Heart right ventricle (tissue), 16 donors: ENCODE measurements at regions of chr14 and their contacts with region 1.

Region 1: GRCh38 chr14:58637391-58638230 is at the start of gene DACT1:
- DNase-seq: peak; percentile 51 to 77
- ATAC-seq: peak; percentile 65 to 91 (median 76)
- H3K4me3 ChIP-seq: peak within 1 kb of the TSS; percentile 49 to 81 (median 70)
- H3K27ac ChIP-seq: peak within 1 kb of the TSS; percentile 71 to 93 (median 84)
- H3K4me1 ChIP-seq: peaks cover 0 to 43% (median 23%) of the 10 kb centered on the region in 9 donors
- H3K27me3 ChIP-seq: peaks cover 0 to 36% (median 0%) of the 10 kb centered on the region in 7 donors
- CTCF ChIP-seq: peak in 3 of 9 donors; percentile 10 to 12 (median 12)
- total RNA-seq, gene DACT1: 1.3 to 5.5 (median 3.1) TPM

Region 2: DNA sequence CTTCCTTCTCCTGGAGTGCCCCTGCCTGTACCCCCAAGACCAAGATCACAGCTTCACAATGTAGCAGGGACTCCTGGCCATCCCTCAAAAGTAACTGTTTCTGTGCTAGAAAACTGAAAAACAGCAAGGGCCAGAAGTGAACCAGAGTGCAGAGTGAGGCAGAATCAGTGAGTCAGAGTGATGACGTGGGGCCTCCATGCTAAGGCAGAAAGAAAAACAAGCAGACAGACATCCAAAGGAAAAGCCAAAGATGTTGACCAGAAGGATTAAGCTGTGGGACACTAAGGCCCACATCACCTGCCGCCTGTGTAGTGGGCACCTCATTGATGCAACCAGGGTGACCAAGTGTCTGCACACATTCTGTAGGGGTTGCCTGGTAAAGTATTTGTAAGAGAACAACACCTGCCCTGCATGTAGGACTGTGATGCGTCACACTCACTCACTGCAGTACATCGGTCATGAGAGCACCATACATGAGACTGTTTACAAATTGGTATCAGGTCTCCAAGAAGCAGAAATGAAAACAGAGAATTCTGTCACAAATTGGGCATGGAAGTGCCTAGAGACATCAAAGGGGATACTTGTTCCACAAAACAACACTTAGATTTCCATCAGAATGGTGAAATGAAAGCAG is 536.8 kb before region 1 on chr14:
- intact Hi-C with region 1: no loop called
- DNase-seq: no peak
- ATAC-seq: no peak
- H3K4me3 ChIP-seq: no peak overlapping the region
- H3K27ac ChIP-seq: peak overlapping the region in 3 of 10 donors; percentile 1 to 90 (median 90)
- H3K4me1 ChIP-seq: peaks cover 0 to 69% (median 9%) of the 10 kb centered on the region in 9 donors
- H3K27me3 ChIP-seq: no peaks in the 10 kb centered on the region
- CTCF ChIP-seq: no peak

Region 3: GRCh38 chr14:58501214-58501816 is 136.3 kb before region 1 on chr14:
- intact Hi-C with region 1: loop called in 6 of 10 experiments (anchors 5 to 10 kb)
- DNase-seq: peak in 1 of 2 donors; percentile 22
- ATAC-seq: peak in 3 of 8 donors; percentile 44 to 62 (median 50)
- H3K4me3 ChIP-seq: no peak overlapping the region
- H3K27ac ChIP-seq: no peak overlapping the region
- H3K4me1 ChIP-seq: no peaks in the 10 kb centered on the region
- H3K27me3 ChIP-seq: no peaks in the 10 kb centered on the region
- CTCF ChIP-seq: peak; percentile 57 to 87 (median 82)

Region 4: GRCh38 chr14:58705066-58705465 is 67.5 kb after region 1 on chr14:
- intact Hi-C with region 1: loop called in 1 of 10 experiments (anchors 2 kb)
- DNase-seq: peak in 1 of 2 donors; percentile 15
- ATAC-seq: peak in 1 of 8 donors; percentile 31
- H3K4me3 ChIP-seq: no peak overlapping the region
- H3K27ac ChIP-seq: no peak overlapping the region
- H3K4me1 ChIP-seq: peaks cover 0 to 17% (median 0%) of the 10 kb centered on the region in 9 donors
- H3K27me3 ChIP-seq: peaks cover 0 to 4% (median 0%) of the 10 kb centered on the region in 7 donors
- CTCF ChIP-seq: no peak

Region 5: DNA sequence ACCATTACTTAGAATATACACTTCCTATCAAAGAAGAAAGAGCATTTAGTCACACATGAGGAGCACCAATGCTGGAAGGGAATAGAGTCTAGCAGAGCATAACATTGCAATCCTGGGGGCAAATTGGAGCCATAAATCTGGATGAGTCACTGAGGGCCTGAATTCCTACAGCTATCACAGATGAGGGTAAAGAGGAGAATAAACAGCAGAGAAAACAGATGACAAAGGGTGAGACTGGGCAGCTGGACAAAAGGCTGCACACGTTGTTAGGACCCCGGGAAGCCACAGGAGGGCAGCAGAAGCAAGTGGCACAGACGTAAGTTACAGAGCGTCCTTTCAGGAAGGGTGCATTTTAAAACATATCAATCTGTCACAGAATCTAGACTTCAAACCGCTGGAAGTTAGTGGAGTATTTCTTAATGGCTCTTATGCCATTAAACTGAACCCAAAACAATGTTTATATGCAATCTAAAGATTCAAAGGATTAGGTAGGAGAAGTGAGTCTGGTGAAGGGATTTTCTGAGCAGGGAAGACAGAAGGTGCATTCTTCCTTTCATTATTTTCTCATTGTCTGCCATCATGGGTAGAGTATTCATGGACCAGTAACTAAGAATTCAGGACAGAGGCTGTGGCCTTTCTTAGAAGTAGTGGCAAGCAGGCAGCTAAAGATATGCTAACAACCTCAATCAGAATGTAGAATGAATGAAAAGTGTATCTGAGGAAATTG is 391.0 kb after region 1 on chr14:
- intact Hi-C with region 1: loop called in 8 of 10 experiments (anchors 5 to 10 kb)
- DNase-seq: peak; percentile 25 to 41
- ATAC-seq: peak in 7 of 8 donors; percentile 58 to 81 (median 74)
- H3K4me3 ChIP-seq: no peak overlapping the region
- H3K27ac ChIP-seq: no peak overlapping the region
- H3K4me1 ChIP-seq: peaks cover 0 to 9% (median 0%) of the 10 kb centered on the region in 9 donors
- H3K27me3 ChIP-seq: no peaks in the 10 kb centered on the region
- CTCF ChIP-seq: peak; percentile 41 to 83 (median 77)

Region 6: GRCh38 chr14:59046746-59047145 is 409.1 kb after region 1 on chr14:
- intact Hi-C with region 1: loop called in 3 of 10 experiments (anchors 5 to 10 kb)
- DNase-seq: no peak
- ATAC-seq: no peak
- H3K4me3 ChIP-seq: no peak overlapping the region
- H3K27ac ChIP-seq: no peak overlapping the region
- H3K4me1 ChIP-seq: no peaks in the 10 kb centered on the region
- H3K27me3 ChIP-seq: no peaks in the 10 kb centered on the region
- CTCF ChIP-seq: no peak

Region 7: DNA sequence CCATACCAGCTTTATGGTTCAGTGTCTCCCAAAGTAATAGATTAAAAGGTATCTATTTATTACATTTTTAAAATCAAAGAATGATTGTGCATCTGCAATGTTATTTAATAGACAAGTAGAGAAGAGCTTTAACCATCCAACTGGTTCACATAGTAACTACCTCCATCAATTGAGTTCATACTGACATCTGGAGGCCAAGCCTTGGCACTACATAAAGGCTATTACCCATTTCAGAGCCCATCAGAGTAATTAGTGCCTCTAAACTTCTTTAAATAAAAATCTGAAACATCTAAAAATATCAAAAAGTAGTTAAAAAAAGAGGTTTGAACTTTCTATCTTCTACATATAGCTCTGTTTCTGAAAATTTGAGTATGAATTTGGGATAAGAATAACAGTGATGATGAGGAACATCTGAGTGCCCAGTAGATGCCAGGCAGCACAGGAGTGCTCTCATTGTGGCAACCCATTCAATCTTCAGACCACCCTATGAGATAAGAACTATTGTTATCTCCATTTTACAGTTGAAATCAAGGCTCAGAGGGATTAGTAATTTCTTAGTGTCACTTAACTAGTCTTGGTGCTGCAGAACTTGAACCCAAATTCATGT is 417.9 kb after region 1 on chr14:
- intact Hi-C with region 1: loop called in 3 of 10 experiments (anchors 2 to 10 kb)
- DNase-seq: peak in 1 of 2 donors; percentile 13
- ATAC-seq: peak in 5 of 8 donors; percentile 38 to 81 (median 74)
- H3K4me3 ChIP-seq: no peak overlapping the region
- H3K27ac ChIP-seq: no peak overlapping the region
- H3K4me1 ChIP-seq: no peaks in the 10 kb centered on the region
- H3K27me3 ChIP-seq: peaks cover 0 to 9% (median 0%) of the 10 kb centered on the region in 7 donors
- CTCF ChIP-seq: peak; percentile 50 to 87 (median 75)